ENCODE measurements at regions of chr11 and their contacts with region 1.

Region 1: GRCh38 chr11:12052676-12053605 is 44.5 kb upstream of the DKK3 start:
- DNase-seq: peak in 1 of 7 donors; percentile 46
- H3K4me3 ChIP-seq: no peak overlapping the region
- H3K27ac ChIP-seq: peak overlapping the region in 1 of 5 donors; percentile 32
- H3K4me1 ChIP-seq: peaks cover 9 to 10% of the 10 kb centered on the region in 2 donors
- H3K27me3 ChIP-seq: no peaks in the 10 kb centered on the region
- CTCF ChIP-seq: no peak
- POLR2A ChIP-seq: no peak

Region 2: GRCh38 chr11:11923828-11924227 is 129.1 kb before region 1 on chr11:
- intact Hi-C with region 1: no loop called
- DNase-seq: no peak
- H3K4me3 ChIP-seq: no peak overlapping the region
- H3K27ac ChIP-seq: peak overlapping the region in 1 of 5 donors; percentile 15
- H3K4me1 ChIP-seq: peaks cover 4 to 11% of the 10 kb centered on the region in 2 donors
- H3K27me3 ChIP-seq: no peaks in the 10 kb centered on the region
- CTCF ChIP-seq: no peak
- POLR2A ChIP-seq: no peak

Region 3: GRCh38 chr11:12200279-12201010 is 147.5 kb after region 1 on chr11:
- intact Hi-C with region 1: no loop called
- DNase-seq: peak in 4 of 7 donors; percentile 38 to 70 (median 48)
- H3K4me3 ChIP-seq: no peak overlapping the region
- H3K27ac ChIP-seq: peak overlapping the region in 3 of 5 donors; percentile 33 to 86 (median 72)
- H3K4me1 ChIP-seq: peaks cover 0 to 13% of the 10 kb centered on the region in 2 donors
- H3K27me3 ChIP-seq: no peaks in the 10 kb centered on the region
- CTCF ChIP-seq: no peak
- POLR2A ChIP-seq: no peak

Region 4: DNA sequence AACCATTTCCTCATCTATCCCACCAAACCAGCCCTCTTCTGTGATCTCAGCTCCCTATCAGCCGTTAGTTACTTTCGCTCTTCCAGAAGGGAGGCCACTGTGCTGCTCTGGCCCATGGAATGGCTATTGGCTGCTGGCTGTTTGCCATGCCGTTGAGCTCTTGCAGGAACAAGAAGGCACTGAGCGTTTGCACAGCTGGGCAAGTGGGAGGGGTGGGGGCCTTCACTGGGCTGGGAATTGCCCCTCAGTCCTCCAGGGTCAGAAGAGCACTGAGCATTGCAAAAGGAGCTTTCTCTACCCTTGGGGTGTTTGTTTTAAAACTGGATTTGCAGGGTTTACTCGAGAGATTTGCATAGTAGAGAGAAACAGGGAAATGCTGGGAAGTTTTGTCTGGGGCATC is 195.4 kb after region 1 on chr11:
- intact Hi-C with region 1: loop called in 1 of 2 experiments (anchors 10 kb)
- DNase-seq: peak in 6 of 7 donors; percentile 23 to 75 (median 47)
- H3K4me3 ChIP-seq: no peak overlapping the region
- H3K27ac ChIP-seq: peak overlapping the region in 1 of 5 donors; percentile 52
- H3K4me1 ChIP-seq: no peaks in the 10 kb centered on the region
- H3K27me3 ChIP-seq: no peaks in the 10 kb centered on the region
- CTCF ChIP-seq: no peak
- POLR2A ChIP-seq: no peak

Region 5: GRCh38 chr11:12281571-12282478 is 228.9 kb after region 1 on chr11:
- intact Hi-C with region 1: loop called in 1 of 2 experiments (anchors 5 kb)
- DNase-seq: peak; percentile 78 to 96 (median 89)
- H3K4me3 ChIP-seq: no peak overlapping the region
- H3K27ac ChIP-seq: no peak overlapping the region
- H3K4me1 ChIP-seq: no peaks in the 10 kb centered on the region
- H3K27me3 ChIP-seq: no peaks in the 10 kb centered on the region
- CTCF ChIP-seq: peak; percentile 95 to 99 (median 98)
- POLR2A ChIP-seq: no peak

Region 6: DNA sequence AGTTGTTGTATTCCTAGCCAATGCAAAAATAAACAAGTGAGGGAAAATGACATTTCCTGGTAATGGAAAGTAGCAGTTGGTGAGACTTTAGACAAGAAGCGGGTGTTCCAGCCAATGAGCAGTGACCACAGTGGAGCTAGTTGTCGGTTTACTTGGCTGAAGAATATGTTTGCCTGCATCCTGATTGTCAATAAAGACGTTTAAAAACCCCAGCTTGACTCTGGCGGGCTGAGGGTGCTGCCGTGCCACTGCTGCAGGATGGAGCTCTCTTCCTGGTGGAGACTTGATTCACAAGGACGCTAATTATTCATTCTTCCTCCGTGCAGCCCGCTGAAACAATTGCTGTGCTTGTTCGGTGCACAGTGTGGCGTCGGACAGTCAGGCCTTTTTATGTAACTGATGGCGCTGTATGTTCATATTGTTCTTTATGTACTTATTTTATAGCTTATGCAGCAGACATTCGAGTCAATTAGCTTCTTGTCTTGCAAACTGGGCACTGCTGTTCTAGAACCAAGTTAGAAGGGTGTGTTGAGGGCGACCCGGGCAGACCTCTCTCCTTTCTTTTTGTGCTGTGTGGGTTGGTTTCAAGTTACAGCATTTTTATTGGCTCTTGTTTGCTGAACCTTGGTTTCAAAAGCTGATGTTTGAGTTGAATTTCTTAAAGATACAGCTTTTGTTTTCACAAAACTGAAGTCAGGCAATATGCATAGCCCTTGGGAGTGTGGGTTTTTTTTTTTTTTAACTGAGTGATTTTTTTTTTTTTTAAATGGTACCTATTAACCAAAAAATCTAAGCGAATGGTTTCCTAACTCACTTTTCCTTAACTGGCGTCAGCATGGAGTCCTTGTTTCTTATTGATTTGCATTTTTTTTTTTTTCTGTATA is 775.2 kb after region 1 on chr11:
- intact Hi-C with region 1: no loop called
- DNase-seq: peak; percentile 33 to 76 (median 55)
- H3K4me3 ChIP-seq: peak overlapping the region in 2 of 4 donors; percentile 42 to 52
- H3K27ac ChIP-seq: peak overlapping the region; percentile 19 to 82 (median 68)
- H3K4me1 ChIP-seq: peaks cover 19 to 42% of the 10 kb centered on the region in 2 donors
- H3K27me3 ChIP-seq: no peaks in the 10 kb centered on the region
- CTCF ChIP-seq: no peak
- POLR2A ChIP-seq: peak in 1 of 2 donors; percentile 69

Measured in adrenal gland (tissue), 19 donors.